Cardiac septum (tissue), 1 donor: ENCODE measurements at regions of chr10 and their contacts with region 1.

Region 1: DNA sequence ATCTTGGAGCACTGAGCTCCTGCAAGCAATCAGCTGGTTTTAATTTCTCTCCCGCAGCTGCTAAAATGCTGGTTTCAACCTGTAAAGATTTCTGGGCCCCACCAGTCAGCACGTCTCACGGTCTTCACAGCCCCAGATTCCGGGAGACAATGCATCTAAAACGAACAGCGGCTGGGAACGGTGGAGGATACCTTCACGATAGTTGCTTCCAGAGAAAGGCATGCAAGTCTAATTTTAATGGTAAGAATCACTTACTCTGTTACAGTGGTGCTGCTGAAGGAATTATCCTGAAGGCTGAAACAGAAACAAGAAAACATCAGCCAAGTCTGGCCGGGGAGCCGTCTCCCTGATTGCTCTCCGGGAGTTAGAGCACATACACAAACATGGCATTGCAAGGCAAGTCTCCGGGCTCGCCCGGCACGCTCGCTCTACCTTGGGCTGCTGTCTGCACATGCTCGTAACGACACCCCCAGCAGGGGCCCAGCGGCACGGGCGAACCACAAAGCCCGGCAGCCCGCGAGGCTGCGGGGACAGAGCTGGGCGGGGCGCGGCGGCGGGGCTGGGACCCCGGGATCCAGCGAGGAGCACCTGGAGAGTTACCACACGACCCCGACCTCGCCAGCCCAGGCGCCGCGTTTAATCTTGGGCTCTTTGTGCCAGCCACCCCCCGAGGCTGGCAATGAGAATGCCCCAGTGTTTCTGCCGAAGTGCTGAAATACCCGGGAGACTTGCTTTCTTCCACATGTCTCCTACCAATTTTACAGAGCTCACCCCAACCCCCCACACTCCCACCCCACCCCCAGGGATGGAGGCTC is at the start of gene FAM13C:
- DNase-seq: peak; percentile 83
- total RNA-seq, gene FAM13C: 7.5 TPM

Region 2: GRCh38 chr10:59315465-59315864 is 46.9 kb before region 1 on chr10:
- intact Hi-C with region 1: loop called (anchors 2 kb)
- DNase-seq: no peak

Region 3: GRCh38 chr10:59536167-59536930 is 174.0 kb after region 1 on chr10:
- intact Hi-C with region 1: loop called (anchors 10 kb)
- DNase-seq: no peak